Mammary epithelial cell (primary cell): ENCODE measurements at regions of chr19 and their contacts with region 1.

Region 1: GRCh38 chr19:19138169-19138981 is at the start of gene TMEM161A:
- DNase-seq: peak; percentile 99
- H3K4me3 ChIP-seq: peak within 1 kb of the TSS; percentile 64 to 91 (median 76)
- H3K27ac ChIP-seq: peak within 1 kb of the TSS; percentile 65
- H3K4me1 ChIP-seq: no peaks in the 10 kb centered on the region
- H3K27me3 ChIP-seq: no peaks in the 10 kb centered on the region
- CTCF ChIP-seq: no peak
- total RNA-seq, gene TMEM161A: 21.5 to 33.0 TPM

Region 2: GRCh38 chr19:19033426-19034203 is 104.8 kb before region 1 on chr19 and contains the starts of genes ARMC6 and SUGP2:
- CTCF ChIA-PET with region 1: no interaction called
- dilution Hi-C with region 1: no loop called
- in situ Hi-C with region 1: no loop called
- intact Hi-C with region 1: loop called (anchors 1 kb)
- DNase-seq: peak; percentile 84
- H3K4me3 ChIP-seq: peak within 1 kb of the TSS; percentile 78 to 93 (median 83)
- H3K27ac ChIP-seq: peak within 1 kb of the TSS; percentile 62
- H3K4me1 ChIP-seq: no peaks in the 10 kb centered on the region
- H3K27me3 ChIP-seq: no peaks in the 10 kb centered on the region
- CTCF ChIP-seq: no peak
- total RNA-seq, gene ARMC6: 35.1 to 37.7 TPM
- total RNA-seq, gene SUGP2: 34.0 to 59.5 TPM

Region 3: GRCh38 chr19:19040417-19040816 is 98.0 kb before region 1 on chr19:
- CTCF ChIA-PET with region 1: no interaction called
- dilution Hi-C with region 1: loop called (anchors 5 kb)
- in situ Hi-C with region 1: no loop called
- intact Hi-C with region 1: no loop called
- DNase-seq: no peak
- H3K4me3 ChIP-seq: no peak overlapping the region
- H3K27ac ChIP-seq: no peak overlapping the region
- H3K4me1 ChIP-seq: no peaks in the 10 kb centered on the region
- H3K27me3 ChIP-seq: no peaks in the 10 kb centered on the region
- CTCF ChIP-seq: no peak

Region 4: GRCh38 chr19:19063183-19064097 is 74.9 kb before region 1 on chr19 and contains the start of gene SLC25A42:
- CTCF ChIA-PET with region 1: no interaction called
- dilution Hi-C with region 1: no loop called
- in situ Hi-C with region 1: no loop called
- intact Hi-C with region 1: loop called (anchors 2 kb)
- DNase-seq: peak; percentile 99
- H3K4me3 ChIP-seq: peak within 1 kb of the TSS; percentile 56 to 82 (median 59)
- H3K27ac ChIP-seq: no peak within 1 kb of the TSS
- H3K4me1 ChIP-seq: peaks cover 23% of the 10 kb centered on the region
- H3K27me3 ChIP-seq: no peaks in the 10 kb centered on the region
- CTCF ChIP-seq: no peak
- total RNA-seq, gene SLC25A42: 3.0 to 5.1 TPM

Region 5: GRCh38 chr19:19098703-19099632 is 39.4 kb before region 1 on chr19:
- CTCF ChIA-PET with region 1: no interaction called
- dilution Hi-C with region 1: loop called (anchors 5 kb)
- in situ Hi-C with region 1: no loop called
- intact Hi-C with region 1: no loop called
- DNase-seq: no peak
- H3K4me3 ChIP-seq: no peak overlapping the region
- H3K27ac ChIP-seq: no peak overlapping the region
- H3K4me1 ChIP-seq: no peaks in the 10 kb centered on the region
- H3K27me3 ChIP-seq: no peaks in the 10 kb centered on the region
- CTCF ChIP-seq: no peak

Region 6: GRCh38 chr19:19115954-19116353 is 22.4 kb before region 1 on chr19:
- CTCF ChIA-PET with region 1: no interaction called
- dilution Hi-C with region 1: no loop called
- in situ Hi-C with region 1: no loop called
- intact Hi-C with region 1: no loop called
- DNase-seq: no peak
- H3K4me3 ChIP-seq: no peak overlapping the region
- H3K27ac ChIP-seq: no peak overlapping the region
- H3K4me1 ChIP-seq: no peaks in the 10 kb centered on the region
- H3K27me3 ChIP-seq: peaks cover 2% of the 10 kb centered on the region
- CTCF ChIP-seq: peak; percentile 36 to 52